PC-3 (cell line): ENCODE measurements at regions of chr5 and their contacts with region 1.

Region 1: DNA sequence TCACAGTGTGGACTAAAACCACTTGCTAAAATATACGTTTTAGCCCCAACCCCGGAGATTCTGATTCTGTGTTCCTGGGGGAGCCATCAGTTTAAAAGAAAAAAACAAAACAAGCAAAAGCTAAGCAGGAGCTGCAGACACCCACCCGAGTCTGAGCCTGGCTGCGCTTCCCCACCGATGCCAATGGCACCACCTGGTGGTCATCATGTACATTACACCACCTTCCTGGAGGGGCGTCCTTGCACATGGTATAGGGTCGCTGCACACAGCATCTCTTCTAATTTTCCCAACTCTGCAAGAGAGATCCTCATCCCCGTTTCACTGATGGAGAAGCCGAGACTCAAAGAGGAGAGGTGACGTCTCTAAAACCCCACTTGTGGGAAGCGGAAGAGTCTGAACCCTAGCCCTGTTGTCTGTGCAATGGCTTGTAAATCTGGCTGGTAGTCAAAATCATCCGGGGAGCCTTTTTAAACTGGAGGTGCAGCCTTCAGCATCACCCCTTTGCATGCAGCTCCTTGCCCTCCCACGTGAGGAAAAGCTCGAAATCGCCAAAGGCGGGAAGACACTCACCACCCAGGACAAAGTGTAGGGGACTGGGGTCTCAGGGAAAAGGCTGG is 23.1 kb upstream of the CNOT6 start:
- DNase-seq: peak; percentile 61
- ATAC-seq: peak; percentile 34; the same call in 1 of the 2 replicates
- H3K4me3 ChIP-seq: no peak overlapping the region
- H3K27ac ChIP-seq: no peak overlapping the region
- H3K4me1 ChIP-seq: peaks cover 6% of the 10 kb centered on the region; the same call in 1 of the 2 replicates
- H3K27me3 ChIP-seq: no peaks in the 10 kb centered on the region
- CTCF ChIP-seq: peak; percentile 85

Region 2: GRCh38 chr5:180098961-180099732 is 371.9 kb before region 1 on chr5:
- CTCF ChIA-PET with region 1: no interaction called
- POLR2A ChIA-PET with region 1: no interaction called
- intact Hi-C with region 1: no loop called
- DNase-seq: no peak
- ATAC-seq: no peak
- H3K4me3 ChIP-seq: no peak overlapping the region
- H3K27ac ChIP-seq: no peak overlapping the region
- H3K4me1 ChIP-seq: no peaks in the 10 kb centered on the region
- H3K27me3 ChIP-seq: no peaks in the 10 kb centered on the region
- CTCF ChIP-seq: no peak

Region 3: DNA sequence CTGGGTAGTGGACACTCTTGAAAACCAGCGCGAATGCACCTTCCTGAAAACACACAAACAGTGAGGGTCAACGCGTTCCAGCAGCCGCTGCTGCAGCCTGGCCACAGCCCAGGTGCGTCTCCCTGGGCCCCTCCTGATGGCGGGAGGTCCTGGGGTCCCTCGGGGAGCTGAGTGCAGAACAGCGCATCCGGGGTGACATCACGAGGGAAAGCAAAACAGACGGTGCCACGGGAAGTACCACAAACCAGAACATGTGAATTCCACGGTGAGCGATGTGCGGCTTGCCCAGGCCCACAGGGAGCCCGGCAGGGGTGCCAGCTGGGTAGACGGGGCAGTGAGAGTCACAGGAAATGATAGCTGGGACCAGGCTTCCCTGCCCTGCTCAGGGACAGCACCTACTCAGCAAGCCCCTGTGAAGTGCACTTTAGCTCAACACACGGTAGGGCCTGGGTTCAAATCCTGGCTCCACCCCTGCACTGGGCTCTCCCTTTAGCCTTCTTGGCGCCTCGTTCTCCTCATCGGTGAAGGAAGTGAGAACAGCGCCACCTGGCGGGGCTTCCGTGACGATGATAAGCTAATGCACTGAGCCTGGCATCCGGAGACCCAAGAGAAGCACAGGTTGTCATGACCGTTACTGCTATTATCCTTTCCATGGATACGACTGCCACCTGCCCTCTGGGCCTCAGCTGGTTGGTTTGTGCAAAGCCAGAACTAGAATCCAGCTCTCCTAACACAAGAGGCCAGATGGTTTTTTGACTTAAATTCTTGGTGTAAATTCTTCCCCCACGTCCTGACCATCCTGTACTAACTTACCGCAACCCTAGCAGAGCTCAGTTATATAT is 142.6 kb before region 1 on chr5:
- CTCF ChIA-PET with region 1: no interaction called
- POLR2A ChIA-PET with region 1: no interaction called
- intact Hi-C with region 1: loop called (anchors 5 kb)
- DNase-seq: peak; percentile 85
- ATAC-seq: peak; percentile 41
- H3K4me3 ChIP-seq: no peak overlapping the region
- H3K27ac ChIP-seq: no peak overlapping the region
- H3K4me1 ChIP-seq: peaks cover 34% of the 10 kb centered on the region
- H3K27me3 ChIP-seq: no peaks in the 10 kb centered on the region
- CTCF ChIP-seq: peak; percentile 76